Left lung (tissue), 14 donors: ENCODE measurements at regions of chr3 and their contacts with region 1.

Region 1: GRCh38 chr3:64030741-64031140 is 7.4 kb upstream of the PSMD6 start:
- DNase-seq: peak; percentile 65 to 89 (median 74)
- ATAC-seq: peak; percentile 98
- H3K4me3 ChIP-seq: peak overlapping the region; percentile 10 to 33
- H3K27ac ChIP-seq: no peak overlapping the region
- H3K4me1 ChIP-seq: peaks cover 7 to 8% of the 10 kb centered on the region in 2 donors
- H3K27me3 ChIP-seq: peaks cover 5 to 8% of the 10 kb centered on the region in 2 donors
- CTCF ChIP-seq: peak; percentile 74 to 76

Region 2: DNA sequence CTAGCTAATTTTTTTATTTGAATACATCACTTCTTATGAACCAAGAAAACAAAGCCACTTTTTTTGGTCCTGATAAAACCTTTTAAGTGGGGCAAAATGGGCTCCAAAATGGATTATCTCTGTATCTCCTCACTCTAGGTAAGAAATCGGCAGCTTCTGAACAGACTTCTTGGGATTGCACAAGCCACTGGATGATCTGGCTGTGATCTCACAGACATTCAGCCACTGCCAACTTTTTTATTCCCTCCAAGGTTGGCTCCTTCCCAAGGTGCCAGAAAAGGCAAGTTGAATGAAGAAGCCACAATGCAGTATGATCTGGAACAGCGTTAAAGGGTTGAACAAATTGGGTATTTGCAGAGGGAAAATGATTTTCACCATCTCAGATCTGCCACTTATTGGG is 121.3 kb after region 1 on chr3:
- intact Hi-C with region 1: no loop called
- DNase-seq: peak in 1 of 4 donors; percentile 77
- ATAC-seq: peak; percentile 26
- H3K4me3 ChIP-seq: no peak overlapping the region
- H3K27ac ChIP-seq: peak overlapping the region; percentile 70 to 81
- H3K4me1 ChIP-seq: peaks cover 12 to 14% of the 10 kb centered on the region in 2 donors
- H3K27me3 ChIP-seq: no peaks in the 10 kb centered on the region
- CTCF ChIP-seq: no peak

Region 3: DNA sequence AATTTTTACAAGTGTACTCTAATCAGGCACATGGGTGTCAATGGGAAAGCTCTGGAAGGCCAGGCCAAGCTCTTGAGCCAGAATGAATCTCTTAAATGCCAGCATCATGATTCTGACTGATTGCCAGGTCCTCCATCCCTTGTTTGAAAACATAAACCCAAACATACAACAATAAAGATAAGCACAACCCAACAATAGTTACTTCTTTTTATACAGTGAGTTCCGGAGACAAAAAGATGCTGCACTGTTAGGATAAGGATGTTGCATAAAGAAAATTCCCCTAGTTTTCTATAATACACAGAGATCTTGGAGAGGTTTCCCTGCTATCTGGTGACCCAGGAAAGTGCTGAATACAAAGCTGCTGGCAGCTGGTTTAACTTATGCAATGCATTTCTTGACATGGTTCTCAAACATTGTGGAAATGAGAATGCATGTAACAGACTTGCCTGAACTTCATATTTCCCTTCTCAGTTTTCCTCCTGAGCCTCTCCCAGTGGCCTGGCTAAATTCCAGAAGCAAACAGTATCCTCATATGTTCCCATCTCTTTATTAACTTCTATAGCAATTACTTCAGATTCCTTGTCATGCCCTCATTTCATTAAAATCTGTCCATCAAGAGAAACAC is 374.6 kb after region 1 on chr3:
- intact Hi-C with region 1: loop called in 1 of 2 experiments (anchors 10 kb)
- DNase-seq: peak in 2 of 4 donors; percentile 50 to 77
- ATAC-seq: no peak
- H3K4me3 ChIP-seq: no peak overlapping the region
- H3K27ac ChIP-seq: peak overlapping the region in 1 of 2 donors; percentile 23
- H3K4me1 ChIP-seq: peaks cover 0 to 9% of the 10 kb centered on the region in 2 donors
- H3K27me3 ChIP-seq: no peaks in the 10 kb centered on the region
- CTCF ChIP-seq: no peak

Region 4: DNA sequence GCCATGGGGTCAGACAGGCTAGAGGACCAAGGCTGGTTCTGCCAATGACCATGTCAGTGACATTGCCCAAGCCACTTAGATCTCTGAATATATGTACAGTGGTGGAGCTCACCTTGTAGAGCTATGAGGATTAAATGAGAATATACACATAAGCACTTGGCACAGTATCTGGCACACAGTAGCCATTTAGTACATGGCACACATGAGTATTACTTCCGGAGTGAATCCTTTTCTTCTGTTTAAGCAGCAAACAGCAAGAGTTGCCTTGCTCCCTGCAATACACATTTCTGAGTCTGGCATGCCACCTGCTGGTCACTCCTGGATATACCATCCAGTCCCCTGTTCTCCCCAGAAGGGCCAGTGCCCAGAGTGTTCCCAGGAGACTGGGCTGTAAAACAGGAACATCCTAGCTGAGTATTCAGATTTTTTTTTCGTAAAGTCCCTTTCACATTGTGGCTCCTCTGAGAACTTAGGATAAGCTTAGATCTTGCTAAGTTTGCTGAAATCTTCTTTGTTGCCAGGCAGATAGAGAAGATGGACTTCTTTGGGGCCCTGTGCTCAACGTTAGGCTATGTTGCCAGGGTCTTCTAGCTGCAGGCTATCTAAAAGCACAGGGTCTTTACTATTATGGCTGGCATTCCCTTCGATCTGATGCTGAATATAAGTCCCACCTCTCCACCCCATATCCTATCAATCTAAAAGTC is 453.7 kb after region 1 on chr3:
- intact Hi-C with region 1: loop called in 1 of 2 experiments (anchors 2 kb)
- DNase-seq: peak in 3 of 4 donors; percentile 73 to 85 (median 75)
- ATAC-seq: peak; percentile 94
- H3K4me3 ChIP-seq: no peak overlapping the region
- H3K27ac ChIP-seq: no peak overlapping the region
- H3K4me1 ChIP-seq: peaks cover 0 to 6% of the 10 kb centered on the region in 2 donors
- H3K27me3 ChIP-seq: peaks cover 0 to 12% of the 10 kb centered on the region in 2 donors
- CTCF ChIP-seq: peak; percentile 81 to 87